ENCODE measurements at regions of chr20 and their contacts with region 1.

Region 1: GRCh38 chr20:35994994-35995453 is 26.6 kb downstream of the CNBD2 start:
- DNase-seq: peak; percentile 79
- H3K4me3 ChIP-seq: peak overlapping the region in 1 of 2 experiments; percentile 34; a peak in 1 of 4 replicates
- H3K27ac ChIP-seq: no peak overlapping the region
- H3K4me1 ChIP-seq: no peaks in the 10 kb centered on the region
- H3K27me3 ChIP-seq: no peaks in the 10 kb centered on the region
- CTCF ChIP-seq: peak; percentile 98
- EP300 ChIP-seq: no peak
- RAD21 ChIP-seq: peak; percentile 91

Region 2: GRCh38 chr20:35954200-35954906 is 40.7 kb before region 1 on chr20 and contains the start of gene SCAND1:
- CTCF ChIA-PET with region 1: interaction called, 40 read pairs
- POLR2A ChIA-PET with region 1: interaction called, 7 read pairs
- DNase-seq: peak; percentile 95
- H3K4me3 ChIP-seq: peak within 1 kb of the TSS; percentile 88
- H3K27ac ChIP-seq: peak within 1 kb of the TSS; percentile 93 to 96
- H3K4me1 ChIP-seq: peaks cover 11 to 14% of the 10 kb centered on the region in 2 experiments; a peak in 2 of 4 replicates
- H3K27me3 ChIP-seq: no peaks in the 10 kb centered on the region
- CTCF ChIP-seq: peak; percentile 93
- EP300 ChIP-seq: peak in 1 of 2 experiments; percentile 51; a peak in 1 of 4 replicates
- RAD21 ChIP-seq: peak; percentile 52
- polyA plus RNA-seq, gene SCAND1: 26.4 and 44.1 TPM in 2 replicates

Region 3: GRCh38 chr20:35972462-35972861 is 22.6 kb before region 1 on chr20:
- CTCF ChIA-PET with region 1: interaction called, 25 read pairs
- POLR2A ChIA-PET with region 1: no interaction called
- DNase-seq: peak; percentile 81
- H3K4me3 ChIP-seq: no peak overlapping the region
- H3K27ac ChIP-seq: peak overlapping the region in 1 of 2 experiments; percentile 75; a peak in 2 of 4 replicates
- H3K4me1 ChIP-seq: peaks cover 0 to 2% of the 10 kb centered on the region in 2 experiments; a peak in 1 of 4 replicates
- H3K27me3 ChIP-seq: no peaks in the 10 kb centered on the region; the same call in 1 of the 2 replicates
- CTCF ChIP-seq: no peak
- EP300 ChIP-seq: 0 out of 4 replicates have a peak, but pooled peaks of 1 of the 2 experiments have one; percentile 34
- RAD21 ChIP-seq: no peak

Region 4: DNA sequence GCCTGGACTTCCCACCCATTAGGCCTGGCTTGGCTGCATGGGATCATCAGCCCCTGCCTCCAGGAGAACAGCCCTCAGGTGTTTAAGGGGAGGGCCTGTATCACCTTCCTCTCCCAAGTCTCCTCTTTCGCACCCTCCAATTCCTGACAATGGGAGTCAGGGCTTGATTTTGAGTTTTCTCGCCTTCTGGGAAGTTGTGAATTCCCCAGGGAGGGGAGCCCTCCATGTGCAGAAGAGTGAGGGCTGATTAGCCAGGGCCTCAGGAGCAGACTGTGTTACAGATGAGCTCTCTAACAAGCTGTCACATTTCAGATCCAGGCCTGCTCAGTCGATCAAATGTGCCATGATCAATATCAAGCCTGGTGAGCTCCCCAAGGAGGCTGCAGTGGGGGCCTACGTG is 15.8 kb after region 1 on chr20:
- CTCF ChIA-PET with region 1: interaction called, 36 read pairs
- POLR2A ChIA-PET with region 1: no interaction called
- DNase-seq: no peak
- H3K4me3 ChIP-seq: no peak overlapping the region
- H3K27ac ChIP-seq: no peak overlapping the region
- H3K4me1 ChIP-seq: no peaks in the 10 kb centered on the region
- H3K27me3 ChIP-seq: no peaks in the 10 kb centered on the region
- CTCF ChIP-seq: no peak
- EP300 ChIP-seq: no peak
- RAD21 ChIP-seq: no peak

Region 5: GRCh38 chr20:36128463-36129159 is 133.6 kb after region 1 on chr20:
- CTCF ChIA-PET with region 1: interaction called, 560 read pairs
- POLR2A ChIA-PET with region 1: no interaction called
- DNase-seq: no peak
- H3K4me3 ChIP-seq: no peak overlapping the region
- H3K27ac ChIP-seq: peak overlapping the region in 1 of 2 experiments; percentile 24; a peak in 1 of 4 replicates
- H3K4me1 ChIP-seq: peaks cover 5 to 11% of the 10 kb centered on the region in 2 experiments; a peak in 3 of 4 replicates
- H3K27me3 ChIP-seq: no peaks in the 10 kb centered on the region
- CTCF ChIP-seq: no peak
- EP300 ChIP-seq: no peak
- RAD21 ChIP-seq: no peak

Measured in SK-N-SH (cell line).